ENCODE measurements at regions of chr17 and their contacts with region 1.

Region 1: GRCh38 chr17:34788696-34789095 is 172.6 kb downstream of the CCT6B start:
- DNase-seq: no peak
- H3K4me3 ChIP-seq: no peak overlapping the region
- H3K27ac ChIP-seq: no peak overlapping the region
- H3K4me1 ChIP-seq: no peaks in the 10 kb centered on the region
- H3K27me3 ChIP-seq: no peaks in the 10 kb centered on the region
- CTCF ChIP-seq: no peak

Region 2: DNA sequence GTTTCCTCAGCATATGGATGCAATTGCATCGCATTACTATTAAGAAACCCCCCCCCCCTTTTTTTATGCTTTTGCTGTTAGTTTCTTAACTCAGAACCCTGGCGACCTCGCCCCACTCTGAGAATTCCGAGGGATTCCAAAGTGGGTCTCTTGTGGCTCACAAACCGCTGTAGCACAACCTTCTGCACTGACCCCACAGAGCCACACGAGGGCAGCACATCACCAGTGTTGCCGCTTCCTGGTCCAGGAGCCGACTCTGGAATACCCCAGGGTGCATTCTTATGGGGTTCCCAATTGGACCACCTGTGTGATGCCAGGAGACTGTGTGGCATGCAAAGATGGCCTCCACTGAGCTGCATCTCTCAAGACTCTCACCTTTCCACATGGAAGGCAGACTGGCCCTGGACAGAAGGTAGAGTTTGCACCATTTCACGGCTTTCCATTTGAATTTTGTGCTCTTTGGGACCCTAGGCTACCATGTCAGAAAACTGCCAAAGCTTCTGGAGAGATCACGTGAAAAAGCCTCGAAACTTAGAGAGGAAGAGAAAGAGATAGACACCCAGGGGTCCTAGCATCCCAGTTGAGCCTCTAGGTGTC is 1062.9 kb before region 1 on chr17:
- CTCF ChIA-PET with region 1: no interaction called
- dilution Hi-C with region 1: no loop called
- in situ Hi-C with region 1: no loop called
- intact Hi-C with region 1: no loop called
- DNase-seq: no peak
- H3K4me3 ChIP-seq: no peak overlapping the region
- H3K27ac ChIP-seq: no peak overlapping the region
- H3K4me1 ChIP-seq: no peaks in the 10 kb centered on the region
- H3K27me3 ChIP-seq: no peaks in the 10 kb centered on the region
- CTCF ChIP-seq: peak; percentile 60 to 71

Region 3: DNA sequence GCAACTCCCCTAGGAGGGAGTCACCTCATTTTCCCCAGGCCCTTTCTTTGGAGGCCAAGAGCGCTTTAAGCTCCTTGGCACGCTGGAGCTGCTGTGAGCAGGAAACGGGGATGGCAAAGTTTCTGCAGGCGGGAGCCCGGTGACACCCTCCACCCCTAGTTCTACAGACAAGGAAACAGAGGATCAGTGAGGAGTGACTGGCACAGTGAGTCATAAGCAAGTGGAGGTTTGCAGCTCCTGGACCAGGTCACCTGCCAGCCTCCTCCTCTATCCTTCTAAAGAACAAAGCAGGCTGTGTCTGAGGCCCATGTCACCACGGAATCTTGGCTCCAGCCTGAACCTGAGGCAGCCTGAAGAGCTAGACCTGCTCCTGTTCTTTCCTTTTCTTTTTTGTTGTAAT is 67.4 kb before region 1 on chr17:
- CTCF ChIA-PET with region 1: no interaction called
- dilution Hi-C with region 1: loop called (anchors 5 kb)
- in situ Hi-C with region 1: no loop called
- intact Hi-C with region 1: no loop called
- DNase-seq: peak; percentile 12
- H3K4me3 ChIP-seq: no peak overlapping the region
- H3K27ac ChIP-seq: no peak overlapping the region
- H3K4me1 ChIP-seq: no peaks in the 10 kb centered on the region
- H3K27me3 ChIP-seq: no peaks in the 10 kb centered on the region
- CTCF ChIP-seq: no peak

Region 4: GRCh38 chr17:34740565-34741520 is 47.9 kb before region 1 on chr17:
- CTCF ChIA-PET with region 1: no interaction called
- dilution Hi-C with region 1: no loop called
- in situ Hi-C with region 1: no loop called
- intact Hi-C with region 1: no loop called
- DNase-seq: no peak
- H3K4me3 ChIP-seq: no peak overlapping the region
- H3K27ac ChIP-seq: no peak overlapping the region
- H3K4me1 ChIP-seq: no peaks in the 10 kb centered on the region
- H3K27me3 ChIP-seq: no peaks in the 10 kb centered on the region
- CTCF ChIP-seq: no peak